H1 (cell line): ENCODE measurements at regions of chr15 and their contacts with region 1.

Region 1: GRCh38 chr15:89101302-89102191 is 13.3 kb downstream of the ABHD2 start:
- DNase-seq: no peak
- H3K4me3 ChIP-seq: no peak overlapping the region
- H3K27ac ChIP-seq: no peak overlapping the region
- H3K4me1 ChIP-seq: no peaks in the 10 kb centered on the region
- H3K27me3 ChIP-seq: no peaks in the 10 kb centered on the region
- CTCF ChIP-seq: no peak
- EP300 ChIP-seq: no peak
- POLR2A ChIP-seq: no peak
- RAD21 ChIP-seq: no peak

Region 2: DNA sequence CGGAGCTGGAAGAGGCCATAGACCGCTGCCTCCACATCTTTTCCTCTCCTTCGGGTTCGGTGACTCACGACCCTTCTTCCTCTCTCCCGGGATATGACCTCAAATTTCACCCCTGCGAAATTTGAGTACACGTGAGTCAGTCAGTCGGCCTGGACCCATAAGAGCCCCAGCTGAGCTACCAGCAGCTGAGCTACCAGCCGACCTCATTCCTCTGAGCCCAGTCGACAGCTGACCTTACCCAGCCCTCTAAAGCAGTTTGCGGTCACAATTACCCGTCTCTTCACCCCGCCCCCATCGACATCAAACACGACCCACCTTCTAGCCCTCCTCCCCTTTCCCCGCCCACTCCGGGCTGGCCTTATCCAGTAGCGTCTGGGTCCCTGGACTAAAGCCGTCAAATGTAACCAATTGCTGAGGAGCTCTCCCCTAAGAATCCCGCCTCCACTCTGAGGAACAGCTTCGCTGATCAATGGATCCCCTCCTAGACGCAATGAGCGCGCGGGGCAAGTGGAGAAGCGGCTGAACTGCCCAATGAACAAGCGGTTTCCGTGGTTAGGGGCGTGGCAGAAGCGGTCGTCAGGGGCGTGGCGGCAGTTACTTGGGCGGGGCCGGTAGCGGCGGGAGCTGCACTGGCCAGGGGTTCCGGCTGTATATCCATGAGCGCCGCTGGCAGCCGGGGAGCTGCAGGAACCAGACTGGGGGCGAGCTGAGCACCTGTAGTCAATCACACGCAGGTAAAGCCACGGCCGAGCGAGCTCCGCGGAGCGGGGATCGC is 13.5 kb before region 1 on chr15 and contains the start of gene ABHD2:
- CTCF ChIA-PET with region 1: interaction called, 10 read pairs
- POLR2A ChIA-PET with region 1: interaction called, 9 read pairs
- DNase-seq: peak; percentile 99
- H3K4me3 ChIP-seq: peak within 1 kb of the TSS; percentile 84 to 90 (median 87)
- H3K27ac ChIP-seq: peak within 1 kb of the TSS; percentile 35; the same call in 1 of the 2 replicates
- H3K4me1 ChIP-seq: peaks cover 8 to 20% (median 12%) of the 10 kb centered on the region in 4 experiments
- H3K27me3 ChIP-seq: no peaks in the 10 kb centered on the region
- CTCF ChIP-seq: no peak
- EP300 ChIP-seq: peak in 1 of 2 experiments; percentile 56; a peak in 1 of 3 replicates
- POLR2A ChIP-seq: peak in 1 of 2 experiments; percentile 80; a peak in 2 of 3 replicates
- RAD21 ChIP-seq: no peak
- total RNA-seq, gene ABHD2: 23.7 and 27.6 TPM in 2 replicates

Region 3: DNA sequence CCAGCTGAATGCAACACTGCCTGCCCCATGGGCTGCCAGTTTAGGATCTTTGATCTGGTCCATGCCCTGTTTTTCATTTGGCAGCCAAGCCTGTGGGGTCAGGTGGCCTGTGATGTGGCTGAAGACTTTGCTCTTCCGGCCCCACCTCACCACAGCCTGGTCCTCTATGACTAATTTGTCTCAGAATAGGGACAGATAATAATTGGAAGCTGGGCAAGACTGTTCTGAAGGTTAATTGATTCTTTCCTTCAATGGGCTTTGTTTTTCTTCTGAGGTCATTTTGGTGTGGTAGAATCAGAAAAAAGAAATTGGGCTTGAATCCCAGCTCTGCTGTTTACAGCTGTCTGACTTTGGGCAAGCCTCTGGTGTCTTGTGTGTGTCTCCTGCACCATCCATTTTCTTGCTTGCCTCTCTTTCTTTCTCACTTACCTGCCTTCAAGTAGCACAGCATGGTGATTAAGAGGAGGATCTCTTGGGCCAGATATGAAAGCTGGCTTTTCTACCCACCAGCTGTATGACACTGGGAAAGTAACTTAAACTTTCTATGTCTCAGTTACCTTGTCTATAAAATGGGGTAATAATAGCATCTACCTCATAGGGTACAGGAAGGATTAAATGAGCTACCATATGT is 10.9 kb after region 1 on chr15:
- CTCF ChIA-PET with region 1: interaction called, 21 read pairs
- POLR2A ChIA-PET with region 1: interaction called, 20 read pairs
- DNase-seq: no peak
- H3K4me3 ChIP-seq: no peak overlapping the region
- H3K27ac ChIP-seq: no peak overlapping the region
- H3K4me1 ChIP-seq: peaks cover 12 to 35% (median 16%) of the 10 kb centered on the region in 4 experiments
- H3K27me3 ChIP-seq: peaks cover 0 to 1% (median 0%) of the 10 kb centered on the region in 4 experiments; a peak in 1 of 7 replicates
- CTCF ChIP-seq: no peak
- EP300 ChIP-seq: no peak
- POLR2A ChIP-seq: no peak
- RAD21 ChIP-seq: no peak